Panc1 (cell line): ENCODE measurements at regions of chr19 and their contacts with region 1.

Region 1: DNA sequence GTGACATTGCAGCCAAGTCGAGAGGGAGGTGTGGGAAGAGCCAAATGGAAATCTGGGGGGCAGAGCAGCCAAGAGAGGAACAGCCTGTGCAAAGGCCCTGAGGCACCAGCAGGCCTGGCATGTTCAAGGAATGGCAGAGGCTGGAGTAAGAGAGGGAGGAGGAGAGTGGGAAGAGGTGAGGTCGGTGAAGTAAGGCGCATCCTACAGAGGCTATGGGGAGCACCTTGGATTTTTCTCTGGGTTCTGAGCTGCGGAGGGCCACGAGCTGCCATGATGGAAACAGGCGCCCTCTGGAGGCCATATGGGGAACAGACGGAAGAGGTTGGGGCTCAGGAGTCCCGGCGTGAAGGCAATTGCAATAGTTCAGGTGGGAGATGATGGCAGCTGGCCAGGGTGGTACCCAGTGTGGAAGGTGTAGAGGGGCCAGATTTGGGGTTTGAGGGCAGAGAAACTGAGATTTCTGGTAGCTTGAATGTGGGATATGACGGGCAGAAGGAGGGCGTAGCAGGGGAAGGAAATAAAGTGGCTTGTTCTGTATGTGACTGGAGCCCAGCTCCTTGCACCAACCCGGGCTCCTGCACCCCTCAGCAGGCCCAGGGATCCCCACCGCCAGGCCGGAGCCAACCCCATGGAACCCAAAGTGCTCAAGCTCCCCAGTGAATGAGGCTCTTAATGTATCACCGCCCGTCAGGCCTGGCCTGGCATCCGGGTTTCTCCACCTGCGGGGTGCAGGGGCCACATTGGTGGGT is 20.5 kb upstream of the STRN4 start:
- DNase-seq: no peak
- ATAC-seq: peak; percentile 88
- H3K4me3 ChIP-seq: no peak overlapping the region
- H3K27ac ChIP-seq: no peak overlapping the region
- H3K4me1 ChIP-seq: no peaks in the 10 kb centered on the region
- H3K27me3 ChIP-seq: no peaks in the 10 kb centered on the region
- CTCF ChIP-seq: peak; percentile 88

Region 2: DNA sequence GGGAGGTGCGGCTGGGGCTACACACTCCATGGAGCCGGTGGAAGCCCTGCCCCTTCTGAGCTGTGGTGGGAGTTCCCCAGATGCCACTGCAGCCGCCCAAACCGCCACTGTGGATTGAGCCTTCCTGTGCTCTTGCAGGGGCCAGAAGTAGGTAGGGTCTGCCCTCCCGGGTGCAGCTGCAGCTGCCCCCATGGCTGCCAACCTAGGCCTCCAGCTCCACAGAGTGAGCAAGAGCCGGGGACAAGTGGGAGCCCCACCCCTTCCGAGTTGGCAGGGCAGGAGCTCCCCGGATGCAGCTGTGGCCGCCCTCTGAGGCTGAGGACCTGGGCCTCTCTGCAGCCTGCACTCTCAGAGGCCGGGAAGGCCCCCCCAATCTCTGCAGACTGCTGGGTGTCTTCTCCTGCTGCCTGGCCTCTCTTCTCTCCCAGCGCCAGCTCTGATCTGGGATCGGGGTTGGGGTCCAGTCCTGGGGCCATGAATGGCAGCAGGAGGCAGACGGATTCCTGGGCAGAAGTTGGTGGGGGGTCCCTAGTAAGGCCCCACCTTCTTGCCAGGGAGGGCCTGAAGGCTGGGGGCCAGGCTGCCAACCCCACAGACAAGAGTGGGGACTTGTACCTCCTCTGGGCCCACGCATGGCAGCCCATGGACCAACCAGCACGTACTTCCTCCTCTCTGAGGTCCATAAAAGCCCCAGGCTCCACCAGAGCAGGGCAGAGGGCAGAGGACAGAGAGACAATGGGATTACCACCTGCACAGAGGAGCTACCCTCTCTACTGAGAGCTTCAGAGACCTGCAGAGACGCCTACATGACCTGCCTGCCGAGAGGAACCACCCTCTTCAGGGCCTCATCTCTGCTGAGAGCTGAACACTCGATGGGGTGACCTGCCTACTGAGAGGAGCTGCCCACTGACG is 55.0 kb after region 1 on chr19:
- CTCF ChIA-PET with region 1: interaction called, 10 read pairs
- POLR2A ChIA-PET with region 1: no interaction called
- in situ Hi-C with region 1: no loop called
- intact Hi-C with region 1: no loop called
- DNase-seq: no peak
- ATAC-seq: no peak
- H3K4me3 ChIP-seq: no peak overlapping the region
- H3K27ac ChIP-seq: no peak overlapping the region
- H3K4me1 ChIP-seq: no peaks in the 10 kb centered on the region
- H3K27me3 ChIP-seq: no peaks in the 10 kb centered on the region
- CTCF ChIP-seq: no peak